IMR-90 (cell line): ENCODE measurements at regions of chr7 and their contacts with region 1.

Region 1: DNA sequence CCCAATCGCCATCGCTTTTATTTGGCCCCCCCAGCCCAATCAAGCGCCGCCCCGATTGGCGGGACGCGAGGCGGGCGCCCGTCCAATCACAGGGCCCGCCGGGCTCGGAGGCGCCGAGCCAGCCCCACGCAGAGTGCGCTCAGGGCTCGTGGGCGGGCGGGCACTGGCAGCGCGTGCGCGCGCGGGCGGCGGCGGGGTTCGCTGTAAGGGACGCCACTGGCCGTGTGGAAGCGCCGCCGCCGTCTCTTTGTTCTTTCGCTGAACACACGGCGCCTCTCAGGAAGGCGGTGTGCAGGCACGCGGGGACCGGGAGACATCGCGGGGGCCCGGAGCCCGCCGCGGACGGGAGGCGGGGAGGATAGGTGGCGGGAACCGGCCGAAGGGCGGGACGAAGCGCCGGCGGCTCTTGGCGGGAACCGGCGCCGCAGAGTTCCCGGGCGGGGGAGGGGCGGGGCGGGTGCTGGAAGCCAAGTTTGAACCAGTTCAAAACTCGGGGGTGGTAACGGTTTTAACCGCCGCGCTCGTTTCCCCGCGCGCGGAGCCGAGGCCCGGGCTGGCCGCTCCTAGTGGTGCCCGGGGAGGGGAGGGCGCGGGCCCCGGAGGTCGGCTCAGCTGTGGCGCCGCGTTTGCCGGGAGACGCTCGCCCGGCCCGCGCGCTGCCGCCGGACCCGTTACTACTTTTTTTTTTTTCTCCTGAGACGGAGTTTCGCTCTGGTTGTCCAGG is 370 bp upstream of the EZH2 start:
- DNase-seq: peak; percentile 87
- ATAC-seq: peak; percentile 95
- H3K4me3 ChIP-seq: peak overlapping the region; percentile 95
- H3K27ac ChIP-seq: peak overlapping the region; percentile 95
- H3K4me1 ChIP-seq: peaks cover 2% of the 10 kb centered on the region; the same call in 1 of the 2 replicates
- H3K27me3 ChIP-seq: no peaks in the 10 kb centered on the region
- CTCF ChIP-seq: no peak
- POLR2A ChIP-seq: peak; percentile 71; the same call in 1 of the 2 replicates
- RAD21 ChIP-seq: no peak

Region 2: GRCh38 chr7:147775516-147776284 is 1108.8 kb before region 1 on chr7:
- CTCF ChIA-PET with region 1: no interaction called
- POLR2A ChIA-PET with region 1: no interaction called
- dilution Hi-C with region 1: no loop called
- in situ Hi-C with region 1: no loop called
- intact Hi-C with region 1: no loop called
- DNase-seq: no peak
- ATAC-seq: no peak
- H3K4me3 ChIP-seq: no peak overlapping the region
- H3K27ac ChIP-seq: no peak overlapping the region
- H3K4me1 ChIP-seq: no peaks in the 10 kb centered on the region
- H3K27me3 ChIP-seq: no peaks in the 10 kb centered on the region
- CTCF ChIP-seq: no peak
- POLR2A ChIP-seq: no peak
- RAD21 ChIP-seq: no peak

Region 3: DNA sequence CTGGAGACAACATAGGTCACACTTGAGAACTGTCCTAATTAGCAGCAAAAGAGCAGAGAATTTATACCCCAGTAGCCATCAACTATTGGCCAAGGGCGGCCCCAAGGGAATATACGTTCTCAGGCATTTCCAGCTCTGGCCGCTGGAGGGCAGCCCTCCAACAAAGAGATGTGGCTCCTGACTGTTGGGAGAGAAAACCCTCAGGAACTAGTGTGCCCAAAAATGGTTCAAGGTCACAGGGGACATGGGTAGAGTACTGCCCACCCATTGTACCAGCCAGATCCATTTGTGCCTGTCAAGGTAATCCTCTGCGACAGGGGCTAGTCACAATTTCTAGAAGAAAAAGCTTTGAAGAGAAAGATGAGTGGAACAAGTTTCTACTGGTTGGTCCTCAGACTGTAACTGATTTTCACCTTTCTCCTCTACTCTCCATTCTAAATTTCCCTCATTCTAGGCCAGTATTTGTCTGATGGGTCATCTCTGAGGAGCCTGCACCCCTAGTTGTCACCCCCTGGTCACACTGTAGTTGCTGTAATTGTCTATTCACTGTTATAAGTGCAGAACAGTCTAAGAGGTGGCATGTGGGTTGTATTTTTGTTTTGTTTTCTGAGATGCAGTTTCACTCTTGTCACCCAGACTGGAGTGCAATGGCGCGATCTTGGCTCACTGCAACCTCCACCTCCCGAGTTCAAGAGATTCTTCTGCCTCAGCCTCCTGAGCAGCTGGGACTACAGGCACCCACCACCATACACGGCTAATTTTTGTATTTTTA is 308.6 kb before region 1 on chr7:
- CTCF ChIA-PET with region 1: no interaction called
- POLR2A ChIA-PET with region 1: no interaction called
- dilution Hi-C with region 1: no loop called
- in situ Hi-C with region 1: no loop called
- intact Hi-C with region 1: loop called (anchors 2 kb)
- DNase-seq: peak; percentile 41
- ATAC-seq: peak; percentile 98
- H3K4me3 ChIP-seq: no peak overlapping the region
- H3K27ac ChIP-seq: no peak overlapping the region
- H3K4me1 ChIP-seq: no peaks in the 10 kb centered on the region
- H3K27me3 ChIP-seq: peaks cover 2% of the 10 kb centered on the region; the same call in 1 of the 2 replicates
- CTCF ChIP-seq: peak; percentile 85
- POLR2A ChIP-seq: no peak
- RAD21 ChIP-seq: peak; percentile 83

Region 4: DNA sequence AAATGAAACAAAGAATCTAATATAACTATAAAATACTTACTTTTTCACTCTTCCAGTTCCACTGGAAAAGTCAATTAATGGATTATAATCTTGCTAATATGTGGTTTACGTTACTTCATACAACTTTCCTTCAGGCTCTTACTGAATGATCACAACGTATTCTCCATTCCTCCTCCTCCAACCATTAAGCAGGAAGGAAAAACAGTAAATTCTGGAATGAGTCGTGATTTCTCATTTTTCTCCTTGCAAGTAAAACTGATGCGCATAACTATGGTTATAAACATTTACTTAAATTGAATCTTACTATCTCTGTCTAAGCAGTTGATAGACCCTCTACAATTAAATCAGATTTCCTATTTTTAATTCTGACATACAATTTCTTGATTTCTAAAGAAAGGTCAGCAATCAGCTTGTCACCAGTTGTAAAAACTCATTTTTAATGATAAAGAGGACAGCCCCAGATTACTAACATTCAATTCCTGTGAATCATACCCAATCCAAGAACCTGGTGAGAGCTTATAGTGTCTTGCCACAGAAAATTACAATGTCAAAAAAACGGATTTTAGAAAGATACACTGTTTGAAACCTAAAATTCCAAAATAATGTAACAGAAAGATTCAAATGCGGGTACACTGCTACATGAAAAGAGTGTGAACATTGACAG is 64.6 kb before region 1 on chr7:
- CTCF ChIA-PET with region 1: no interaction called
- POLR2A ChIA-PET with region 1: no interaction called
- dilution Hi-C with region 1: no loop called
- in situ Hi-C with region 1: no loop called
- intact Hi-C with region 1: loop called (anchors 1 kb)
- DNase-seq: peak; percentile 72
- ATAC-seq: peak; percentile 64
- H3K4me3 ChIP-seq: no peak overlapping the region
- H3K27ac ChIP-seq: no peak overlapping the region
- H3K4me1 ChIP-seq: peaks cover 4% of the 10 kb centered on the region
- H3K27me3 ChIP-seq: no peaks in the 10 kb centered on the region
- CTCF ChIP-seq: no peak
- POLR2A ChIP-seq: no peak
- RAD21 ChIP-seq: no peak

Region 5: GRCh38 chr7:148940702-148941597 is 56.5 kb after region 1 on chr7:
- CTCF ChIA-PET with region 1: no interaction called
- POLR2A ChIA-PET with region 1: no interaction called
- dilution Hi-C with region 1: no loop called
- in situ Hi-C with region 1: no loop called
- intact Hi-C with region 1: loop called (anchors 1 kb)
- DNase-seq: peak; percentile 91
- ATAC-seq: peak; percentile 92
- H3K4me3 ChIP-seq: peak overlapping the region; percentile 80
- H3K27ac ChIP-seq: peak overlapping the region; percentile 70
- H3K4me1 ChIP-seq: no peaks in the 10 kb centered on the region
- H3K27me3 ChIP-seq: no peaks in the 10 kb centered on the region
- CTCF ChIP-seq: no peak
- POLR2A ChIP-seq: no peak
- RAD21 ChIP-seq: no peak

Region 6: GRCh38 chr7:148962823-148963582 is 78.5 kb after region 1 on chr7:
- CTCF ChIA-PET with region 1: no interaction called
- POLR2A ChIA-PET with region 1: no interaction called
- dilution Hi-C with region 1: no loop called
- in situ Hi-C with region 1: no loop called
- intact Hi-C with region 1: loop called (anchors 2 kb)
- DNase-seq: peak; percentile 67
- ATAC-seq: peak; percentile 69
- H3K4me3 ChIP-seq: peak overlapping the region; percentile 62
- H3K27ac ChIP-seq: no peak overlapping the region
- H3K4me1 ChIP-seq: no peaks in the 10 kb centered on the region
- H3K27me3 ChIP-seq: peaks cover 3% of the 10 kb centered on the region; the same call in 1 of the 2 replicates
- CTCF ChIP-seq: peak; percentile 88
- POLR2A ChIP-seq: 0 out of 2 replicates have a peak, but pooled peaks have one; percentile 30
- RAD21 ChIP-seq: peak; percentile 96

Region 7: GRCh38 chr7:148987010-148987750 is 102.7 kb after region 1 on chr7:
- CTCF ChIA-PET with region 1: no interaction called
- POLR2A ChIA-PET with region 1: no interaction called
- dilution Hi-C with region 1: no loop called
- in situ Hi-C with region 1: no loop called
- intact Hi-C with region 1: loop called (anchors 5 kb)
- DNase-seq: peak; percentile 91
- ATAC-seq: peak; percentile 87
- H3K4me3 ChIP-seq: peak overlapping the region; percentile 74
- H3K27ac ChIP-seq: peak overlapping the region; percentile 11
- H3K4me1 ChIP-seq: peaks cover 1% of the 10 kb centered on the region; the same call in 1 of the 2 replicates
- H3K27me3 ChIP-seq: no peaks in the 10 kb centered on the region
- CTCF ChIP-seq: no peak
- POLR2A ChIP-seq: no peak
- RAD21 ChIP-seq: no peak

Region 8: DNA sequence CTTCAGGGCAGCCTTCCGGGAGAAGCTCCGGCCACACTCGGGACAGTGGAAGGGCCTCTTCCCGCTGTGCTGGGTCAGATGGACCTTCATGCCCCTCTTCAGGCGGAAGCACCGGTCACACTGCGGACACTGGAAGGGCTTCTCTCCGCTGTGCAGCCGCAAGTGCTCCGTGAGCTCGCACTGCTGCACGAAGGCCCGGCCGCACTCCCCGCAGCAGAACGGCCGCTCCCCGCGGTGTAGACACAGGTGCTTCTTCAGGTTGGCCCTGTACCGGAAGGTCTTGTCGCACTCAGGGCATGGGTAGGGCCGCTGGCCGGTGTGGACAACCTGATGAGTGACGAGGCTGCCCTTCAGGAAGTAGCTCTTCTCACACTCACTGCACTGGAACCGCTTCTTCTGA is 220.3 kb after region 1 on chr7:
- CTCF ChIA-PET with region 1: no interaction called
- POLR2A ChIA-PET with region 1: interaction called, 10 read pairs
- dilution Hi-C with region 1: no loop called
- in situ Hi-C with region 1: no loop called
- intact Hi-C with region 1: no loop called
- DNase-seq: no peak
- ATAC-seq: no peak
- H3K4me3 ChIP-seq: no peak overlapping the region
- H3K27ac ChIP-seq: no peak overlapping the region
- H3K4me1 ChIP-seq: no peaks in the 10 kb centered on the region
- H3K27me3 ChIP-seq: no peaks in the 10 kb centered on the region
- CTCF ChIP-seq: no peak
- POLR2A ChIP-seq: no peak
- RAD21 ChIP-seq: no peak